ENCODE measurements at regions of chr10 and their contacts with region 1.

Region 1: GRCh38 chr10:120735773-120736371 is 115.3 kb upstream of the WDR11 start:
- DNase-seq: peak; percentile 7
- H3K4me3 ChIP-seq: no peak overlapping the region
- H3K27ac ChIP-seq: no peak overlapping the region
- H3K4me1 ChIP-seq: peaks cover 10% of the 10 kb centered on the region
- H3K27me3 ChIP-seq: peaks cover 6% of the 10 kb centered on the region
- CTCF ChIP-seq: peak; percentile 76 to 80

Region 2: DNA sequence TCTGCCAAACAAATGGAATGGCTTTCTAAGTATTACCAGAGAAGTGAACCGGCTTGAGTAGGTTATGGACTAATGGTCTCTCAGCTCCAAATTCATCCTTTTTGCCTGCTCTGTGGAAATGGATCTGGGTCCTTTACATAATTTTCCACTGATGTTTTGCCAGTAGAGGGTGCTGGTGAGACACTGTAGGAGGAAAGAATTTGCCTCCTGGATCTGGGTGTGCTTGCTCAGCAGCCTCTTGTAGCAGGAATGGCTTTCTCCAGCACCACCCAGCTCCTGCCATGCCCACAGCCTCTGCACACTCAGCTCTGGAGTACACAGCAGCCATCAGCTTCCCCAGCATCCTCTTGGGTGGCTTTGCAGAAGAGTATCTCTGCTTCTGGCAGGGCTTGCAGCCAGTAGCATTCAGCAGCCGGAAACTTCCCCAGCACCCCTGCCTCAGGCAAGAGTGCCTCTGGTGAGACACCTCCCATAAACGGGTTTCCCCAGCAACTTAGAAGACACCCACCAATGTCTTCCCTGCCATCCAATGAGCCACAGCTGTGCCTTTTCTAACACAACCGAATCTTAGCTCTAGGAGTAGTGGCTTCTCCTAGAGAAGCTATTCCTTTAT is 513.9 kb before region 1 on chr10:
- CTCF ChIA-PET with region 1: no interaction called
- dilution Hi-C with region 1: no loop called
- in situ Hi-C with region 1: no loop called
- intact Hi-C with region 1: loop called (anchors 10 kb)
- DNase-seq: peak; percentile 45
- H3K4me3 ChIP-seq: no peak overlapping the region
- H3K27ac ChIP-seq: no peak overlapping the region
- H3K4me1 ChIP-seq: no peaks in the 10 kb centered on the region
- H3K27me3 ChIP-seq: no peaks in the 10 kb centered on the region
- CTCF ChIP-seq: peak; percentile 57 to 64

Region 3: DNA sequence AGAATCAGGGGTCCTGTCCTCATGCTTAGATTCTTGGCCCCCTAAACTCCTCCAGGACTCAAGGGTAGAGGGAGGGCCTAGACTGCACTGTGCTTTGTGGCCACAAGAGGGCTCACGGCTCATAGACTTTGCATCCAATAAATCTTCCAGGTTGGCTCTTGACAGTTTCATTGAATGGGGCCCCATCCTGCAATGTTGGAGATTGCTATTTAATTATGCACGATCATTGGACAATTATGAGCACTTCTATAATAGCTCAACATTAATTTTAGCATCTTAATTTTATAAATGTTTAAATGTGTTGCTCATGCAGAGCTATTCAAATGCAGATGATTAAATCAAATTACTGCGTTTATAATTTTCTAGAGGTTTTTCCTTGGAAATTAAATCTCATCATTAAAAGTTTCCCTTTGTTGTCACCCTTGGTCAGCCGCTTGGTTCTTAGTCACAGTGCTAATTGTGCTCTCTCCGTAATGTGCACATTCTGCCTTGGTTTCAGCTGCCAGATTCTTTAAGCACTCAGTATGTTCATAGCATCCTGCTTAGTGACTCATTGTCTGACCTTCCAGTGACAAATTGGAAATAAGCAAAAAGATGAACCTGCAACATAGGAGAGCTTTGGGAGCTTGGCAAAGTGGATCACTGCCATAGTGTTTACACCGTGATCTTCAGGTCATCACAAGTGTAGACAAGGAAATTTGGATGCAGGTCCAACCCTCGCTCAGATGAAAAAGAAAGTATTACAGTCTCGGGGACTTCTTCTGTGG is 312.3 kb before region 1 on chr10:
- CTCF ChIA-PET with region 1: no interaction called
- dilution Hi-C with region 1: no loop called
- in situ Hi-C with region 1: loop called (anchors 5 to 10 kb)
- intact Hi-C with region 1: loop called (anchors 1 kb)
- DNase-seq: peak; percentile 61
- H3K4me3 ChIP-seq: no peak overlapping the region
- H3K27ac ChIP-seq: no peak overlapping the region
- H3K4me1 ChIP-seq: peaks cover 12% of the 10 kb centered on the region
- H3K27me3 ChIP-seq: no peaks in the 10 kb centered on the region
- CTCF ChIP-seq: peak; percentile 98

Region 4: GRCh38 chr10:120436431-120437112 is 299.3 kb before region 1 on chr10:
- CTCF ChIA-PET with region 1: no interaction called
- dilution Hi-C with region 1: no loop called
- in situ Hi-C with region 1: no loop called
- intact Hi-C with region 1: loop called (anchors 1 kb)
- DNase-seq: no peak
- H3K4me3 ChIP-seq: no peak overlapping the region
- H3K27ac ChIP-seq: no peak overlapping the region
- H3K4me1 ChIP-seq: no peaks in the 10 kb centered on the region
- H3K27me3 ChIP-seq: peaks cover 2% of the 10 kb centered on the region
- CTCF ChIP-seq: peak; percentile 6 to 50

Region 5: DNA sequence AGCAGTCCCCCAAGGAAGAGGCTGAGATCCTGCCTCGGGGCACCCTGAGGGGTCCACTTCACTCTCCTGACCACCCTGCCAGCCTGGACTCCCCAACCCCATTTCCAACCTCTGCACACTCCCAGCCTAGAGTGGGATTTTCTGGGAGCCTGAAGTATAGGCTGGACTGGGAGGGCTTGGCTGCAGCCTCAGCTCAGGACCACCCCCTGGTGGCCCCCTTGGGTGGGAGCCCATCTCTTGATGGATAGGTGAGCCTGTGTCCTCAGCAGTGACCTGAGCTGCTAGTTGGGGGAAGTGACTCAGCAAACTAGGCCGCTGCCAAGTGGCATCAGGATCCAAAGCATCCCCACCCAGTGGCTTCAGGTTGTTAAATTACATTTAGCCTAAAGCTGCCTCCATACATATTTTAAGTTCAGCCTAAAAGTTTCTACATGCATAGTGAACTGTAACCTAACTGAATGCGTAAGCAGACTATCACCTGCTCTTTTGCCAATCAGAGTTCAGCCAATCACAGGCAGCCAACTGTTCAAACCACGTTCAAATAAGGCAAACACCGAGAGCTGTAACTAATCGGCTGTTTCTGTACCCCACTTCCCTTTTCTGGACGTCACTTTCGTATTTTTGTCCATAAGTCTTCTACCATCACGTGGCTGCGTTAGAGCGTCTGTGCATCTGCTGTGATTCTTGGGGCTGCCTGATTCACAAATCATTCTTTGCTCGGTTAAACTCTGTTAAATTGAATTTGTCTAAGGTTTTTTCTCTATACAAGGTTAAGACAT is 134.8 kb before region 1 on chr10:
- CTCF ChIA-PET with region 1: no interaction called
- dilution Hi-C with region 1: no loop called
- in situ Hi-C with region 1: no loop called
- intact Hi-C with region 1: loop called (anchors 10 kb)
- DNase-seq: peak; percentile 5
- H3K4me3 ChIP-seq: no peak overlapping the region
- H3K27ac ChIP-seq: no peak overlapping the region
- H3K4me1 ChIP-seq: no peaks in the 10 kb centered on the region
- H3K27me3 ChIP-seq: no peaks in the 10 kb centered on the region
- CTCF ChIP-seq: peak in 1 of 2 donors; percentile 34

Region 6: DNA sequence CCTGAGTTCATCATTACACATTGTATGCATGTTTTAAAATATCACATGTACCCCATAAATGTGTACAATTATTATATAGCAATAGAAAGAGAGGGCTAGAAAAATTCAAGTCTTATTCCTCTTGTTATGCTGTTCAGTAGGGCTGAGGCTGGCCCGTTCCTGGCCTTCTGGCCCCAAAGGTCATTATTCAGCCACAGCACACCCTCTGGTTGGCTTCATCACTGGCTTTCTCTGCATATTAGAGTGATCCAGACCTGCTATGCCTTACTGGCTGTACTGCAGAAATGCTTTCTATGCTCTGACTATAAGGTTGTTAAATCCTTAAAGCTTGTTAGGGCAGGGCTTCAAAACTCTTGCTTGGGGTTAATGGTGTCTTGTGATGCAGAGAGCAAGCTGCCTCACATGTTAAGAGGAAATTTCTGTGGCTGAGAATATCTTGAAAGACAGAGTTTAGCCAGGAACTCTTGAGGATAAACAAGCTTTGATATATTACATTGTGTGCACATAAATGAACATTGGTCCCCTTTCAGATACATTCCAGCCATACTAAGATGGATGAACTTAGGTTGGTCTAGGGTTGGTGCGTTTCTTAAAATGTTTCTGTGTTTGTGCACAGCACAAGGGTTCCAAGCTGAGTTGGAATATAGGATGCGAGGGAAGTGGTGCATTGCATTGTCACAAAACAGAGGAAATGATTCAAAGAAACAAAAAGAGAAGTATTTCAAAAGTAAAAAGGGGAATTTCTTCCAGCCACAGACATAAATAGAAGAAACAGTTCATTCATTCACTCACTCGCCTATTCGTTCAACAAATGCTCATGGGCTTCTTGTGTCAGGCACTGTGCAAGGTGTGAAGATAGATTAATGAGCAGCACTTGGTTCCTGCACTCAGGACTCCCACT is 53.7 kb after region 1 on chr10:
- CTCF ChIA-PET with region 1: no interaction called
- dilution Hi-C with region 1: no loop called
- in situ Hi-C with region 1: no loop called
- intact Hi-C with region 1: no loop called
- DNase-seq: no peak
- H3K4me3 ChIP-seq: no peak overlapping the region
- H3K27ac ChIP-seq: no peak overlapping the region
- H3K4me1 ChIP-seq: no peaks in the 10 kb centered on the region
- H3K27me3 ChIP-seq: peaks cover 1% of the 10 kb centered on the region
- CTCF ChIP-seq: no peak